Naive thymus-derived CD4-positive, alpha-beta T cell (primary cell): ENCODE measurements at regions of chr19 and their contacts with region 1.

Region 1: GRCh38 chr19:9435279-9436268 is at the start of gene ZNF266:
- DNase-seq: peak; percentile 82 to 93 (median 91)
- ATAC-seq: peak; percentile 92
- H3K4me3 ChIP-seq: peak within 1 kb of the TSS; percentile 73
- H3K4me3 Mint-ChIP-seq: peak within 1 kb of the TSS; percentile 89 to 97 (median 93)
- H3K27ac ChIP-seq: peak within 1 kb of the TSS; percentile 94
- H3K27ac Mint-ChIP-seq: peak within 1 kb of the TSS; percentile 95 to 99 (median 98)
- H3K4me1 ChIP-seq: peaks cover 26 to 27% of the 10 kb centered on the region in 2 donors
- H3K4me1 Mint-ChIP-seq: peaks cover 20 to 54% (median 48%) of the 10 kb centered on the region in 7 donors
- H3K27me3 ChIP-seq: no peaks in the 10 kb centered on the region
- H3K27me3 Mint-ChIP-seq: no peaks in the 10 kb centered on the region
- total RNA-seq, gene ZNF266: 34.0 to 73.9 (median 55.0) TPM

Region 2: DNA sequence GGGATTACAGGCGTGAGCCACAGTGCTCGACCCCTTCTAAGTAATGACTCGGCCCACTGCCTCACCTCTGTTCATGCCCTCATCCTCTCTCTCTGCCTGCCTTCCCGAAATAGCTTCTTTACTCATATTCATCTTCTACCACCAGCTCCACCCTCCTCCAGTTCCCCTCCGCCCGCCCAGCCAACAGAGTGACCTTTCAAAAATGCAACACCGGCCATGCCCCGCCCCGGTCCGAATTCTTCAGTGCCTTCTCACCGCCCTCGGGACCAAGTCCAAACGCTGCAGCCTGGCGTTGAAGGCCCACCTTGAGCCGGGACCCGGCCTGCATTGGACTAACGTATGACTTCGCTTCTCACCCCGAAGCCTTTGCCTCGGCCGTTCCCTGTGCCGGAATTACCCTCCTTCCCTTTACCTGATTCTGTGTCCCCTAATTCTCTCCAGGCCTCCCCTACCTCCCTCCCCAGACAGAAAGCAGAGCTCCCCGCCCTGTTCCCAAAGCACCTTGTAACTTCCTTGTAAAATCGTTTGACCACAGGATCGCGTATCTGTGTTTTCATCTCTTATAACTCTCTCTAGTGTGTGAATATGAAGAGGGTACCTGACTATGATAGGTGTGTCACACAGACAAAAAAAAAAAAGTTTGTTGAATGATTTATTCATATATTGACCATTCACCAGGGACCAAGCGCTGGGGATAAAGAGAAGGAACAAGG is 417.3 kb before region 1 on chr19:
- CTCF ChIA-PET with region 1: no interaction called
- POLR2A ChIA-PET with region 1: no interaction called
- intact Hi-C with region 1: no loop called
- DNase-seq: no peak
- ATAC-seq: no peak
- H3K4me3 ChIP-seq: no peak overlapping the region
- H3K4me3 Mint-ChIP-seq: no peak overlapping the region
- H3K27ac ChIP-seq: no peak overlapping the region
- H3K27ac Mint-ChIP-seq: no peak overlapping the region
- H3K4me1 ChIP-seq: no peaks in the 10 kb centered on the region
- H3K4me1 Mint-ChIP-seq: peaks cover 0 to 2% (median 0%) of the 10 kb centered on the region in 7 donors
- H3K27me3 ChIP-seq: no peaks in the 10 kb centered on the region
- H3K27me3 Mint-ChIP-seq: peaks cover 0 to 31% (median 15%) of the 10 kb centered on the region in 5 donors

Region 3: GRCh38 chr19:9205501-9206113 is 230.0 kb before region 1 on chr19:
- CTCF ChIA-PET with region 1: no interaction called
- POLR2A ChIA-PET with region 1: no interaction called
- intact Hi-C with region 1: loop called (anchors 1 kb)
- DNase-seq: peak; percentile 36 to 63 (median 53)
- ATAC-seq: peak; percentile 69
- H3K4me3 ChIP-seq: no peak overlapping the region
- H3K4me3 Mint-ChIP-seq: peak overlapping the region in 9 of 10 donors; percentile 37 to 69 (median 56)
- H3K27ac ChIP-seq: no peak overlapping the region
- H3K27ac Mint-ChIP-seq: no peak overlapping the region
- H3K4me1 ChIP-seq: no peaks in the 10 kb centered on the region
- H3K4me1 Mint-ChIP-seq: peaks cover 0 to 8% (median 0%) of the 10 kb centered on the region in 7 donors
- H3K27me3 ChIP-seq: no peaks in the 10 kb centered on the region
- H3K27me3 Mint-ChIP-seq: peaks cover 0 to 22% (median 6%) of the 10 kb centered on the region in 5 donors

Region 4: GRCh38 chr19:9538183-9539058 is 102.8 kb after region 1 on chr19 and contains the start of gene ZNF426:
- CTCF ChIA-PET with region 1: no interaction called
- POLR2A ChIA-PET with region 1: no interaction called
- intact Hi-C with region 1: loop called (anchors 1 kb)
- DNase-seq: peak; percentile 76 to 90 (median 85)
- ATAC-seq: peak; percentile 96
- H3K4me3 ChIP-seq: peak within 1 kb of the TSS; percentile 93
- H3K4me3 Mint-ChIP-seq: peak within 1 kb of the TSS; percentile 89 to 99 (median 98)
- H3K27ac ChIP-seq: peak within 1 kb of the TSS; percentile 90
- H3K27ac Mint-ChIP-seq: peak within 1 kb of the TSS; percentile 95 to 100 (median 97)
- H3K4me1 ChIP-seq: peaks cover 0 to 7% of the 10 kb centered on the region in 2 donors
- H3K4me1 Mint-ChIP-seq: peaks cover 14 to 46% (median 33%) of the 10 kb centered on the region in 7 donors
- H3K27me3 ChIP-seq: no peaks in the 10 kb centered on the region
- H3K27me3 Mint-ChIP-seq: no peaks in the 10 kb centered on the region
- total RNA-seq, gene ZNF426: 11.2 to 22.6 (median 15.8) TPM

Region 5: DNA sequence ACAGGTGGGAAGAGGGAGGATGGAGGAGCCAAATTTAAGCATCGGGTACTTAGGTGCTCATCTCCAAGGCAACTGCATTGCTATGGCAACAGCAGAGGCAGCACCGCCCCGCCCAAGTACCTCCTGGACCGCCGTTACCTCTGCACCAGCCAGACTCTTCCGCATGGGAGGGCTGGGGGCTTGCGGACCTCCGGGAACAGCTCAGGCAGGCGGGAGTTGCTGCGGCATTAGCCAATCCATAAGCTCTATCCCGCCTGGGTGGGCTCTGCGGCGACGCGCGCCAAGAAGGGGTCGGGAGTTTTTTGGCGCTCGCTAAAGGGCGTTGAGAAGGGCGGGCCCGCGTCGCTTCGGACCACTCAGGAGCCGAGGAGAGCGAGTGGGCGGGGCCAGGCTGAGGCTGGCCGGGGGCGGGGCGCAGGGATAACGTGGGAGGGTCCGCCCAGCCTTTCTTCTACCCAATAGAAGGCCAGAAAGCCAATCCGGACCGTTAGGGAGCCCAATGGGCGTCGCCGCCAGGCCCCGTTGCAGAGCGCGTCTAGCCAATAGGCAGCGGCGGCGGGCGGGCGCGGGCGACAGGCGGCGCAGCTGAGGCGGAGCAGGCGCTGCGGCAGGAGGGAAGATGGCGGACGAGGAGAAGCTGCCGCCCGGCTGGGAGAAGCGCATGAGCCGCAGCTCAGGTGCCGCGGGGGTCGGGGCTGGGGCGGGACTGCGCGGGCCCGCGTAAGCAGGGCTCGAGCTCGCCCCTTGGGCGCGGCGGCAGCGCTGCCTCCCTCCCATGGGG is 399.3 kb after region 1 on chr19 and contains the start of gene PIN1:
- CTCF ChIA-PET with region 1: no interaction called
- POLR2A ChIA-PET with region 1: no interaction called
- intact Hi-C with region 1: no loop called
- DNase-seq: peak; percentile 98 to 100 (median 99)
- ATAC-seq: peak; percentile 98
- H3K4me3 ChIP-seq: peak within 1 kb of the TSS; percentile 92
- H3K4me3 Mint-ChIP-seq: peak within 1 kb of the TSS; percentile 83 to 97 (median 95)
- H3K27ac ChIP-seq: peak within 1 kb of the TSS; percentile 71
- H3K27ac Mint-ChIP-seq: peak within 1 kb of the TSS; percentile 82 to 99 (median 94)
- H3K4me1 ChIP-seq: peaks cover 10 to 11% of the 10 kb centered on the region in 2 donors
- H3K4me1 Mint-ChIP-seq: peaks cover 16 to 32% (median 20%) of the 10 kb centered on the region in 7 donors
- H3K27me3 ChIP-seq: no peaks in the 10 kb centered on the region
- H3K27me3 Mint-ChIP-seq: no peaks in the 10 kb centered on the region
- total RNA-seq, gene PIN1: 41.4 to 93.2 (median 61.1) TPM